Heart right ventricle (tissue), 16 donors: ENCODE measurements at regions of chr15 and their contacts with region 1.

Region 1: GRCh38 chr15:101501703-101502373 is 12.3 kb upstream of the PCSK6 start:
- DNase-seq: no peak
- ATAC-seq: peak; percentile 35 to 70 (median 58)
- H3K4me3 ChIP-seq: no peak overlapping the region
- H3K27ac ChIP-seq: no peak overlapping the region
- H3K4me1 ChIP-seq: peaks cover 2 to 32% (median 27%) of the 10 kb centered on the region in 9 donors
- H3K27me3 ChIP-seq: peaks cover 0 to 17% (median 0%) of the 10 kb centered on the region in 7 donors
- CTCF ChIP-seq: peak in 8 of 9 donors; percentile 5 to 71 (median 59)

Region 2: GRCh38 chr15:101179341-101180153 is 322.3 kb before region 1 on chr15:
- intact Hi-C with region 1: no loop called
- DNase-seq: no peak
- ATAC-seq: no peak
- H3K4me3 ChIP-seq: no peak overlapping the region
- H3K27ac ChIP-seq: peak overlapping the region in 5 of 10 donors; percentile 6 to 37 (median 27)
- H3K4me1 ChIP-seq: peaks cover 7 to 82% (median 45%) of the 10 kb centered on the region in 9 donors
- H3K27me3 ChIP-seq: no peaks in the 10 kb centered on the region
- CTCF ChIP-seq: no peak

Region 3: GRCh38 chr15:101294731-101295606 is 206.9 kb before region 1 on chr15 and contains the start of gene SNRPA1:
- intact Hi-C with region 1: loop called in 7 of 10 experiments (anchors 2 to 10 kb)
- DNase-seq: peak; percentile 97 to 99
- ATAC-seq: peak; percentile 93 to 96 (median 94)
- H3K4me3 ChIP-seq: peak within 1 kb of the TSS; percentile 58 to 99 (median 91)
- H3K27ac ChIP-seq: peak within 1 kb of the TSS; percentile 90 to 99 (median 96)
- H3K4me1 ChIP-seq: peaks cover 0 to 43% (median 34%) of the 10 kb centered on the region in 9 donors
- H3K27me3 ChIP-seq: no peaks in the 10 kb centered on the region
- CTCF ChIP-seq: no peak
- total RNA-seq, gene SNRPA1: 23.8 to 36.3 (median 29.9) TPM

Region 4: GRCh38 chr15:101307048-101307896 is 194.6 kb before region 1 on chr15:
- intact Hi-C with region 1: loop called in 5 of 10 experiments (anchors 5 to 10 kb)
- DNase-seq: no peak
- ATAC-seq: peak in 2 of 8 donors; percentile 23 to 24
- H3K4me3 ChIP-seq: no peak overlapping the region
- H3K27ac ChIP-seq: no peak overlapping the region
- H3K4me1 ChIP-seq: no peaks in the 10 kb centered on the region
- H3K27me3 ChIP-seq: no peaks in the 10 kb centered on the region
- CTCF ChIP-seq: no peak

Region 5: GRCh38 chr15:101353240-101353639 is 148.6 kb before region 1 on chr15:
- intact Hi-C with region 1: loop called in 3 of 10 experiments (anchors 5 kb)
- DNase-seq: no peak
- ATAC-seq: no peak
- H3K4me3 ChIP-seq: no peak overlapping the region
- H3K27ac ChIP-seq: no peak overlapping the region
- H3K4me1 ChIP-seq: peaks cover 0 to 29% (median 17%) of the 10 kb centered on the region in 9 donors
- H3K27me3 ChIP-seq: no peaks in the 10 kb centered on the region
- CTCF ChIP-seq: no peak

Region 6: DNA sequence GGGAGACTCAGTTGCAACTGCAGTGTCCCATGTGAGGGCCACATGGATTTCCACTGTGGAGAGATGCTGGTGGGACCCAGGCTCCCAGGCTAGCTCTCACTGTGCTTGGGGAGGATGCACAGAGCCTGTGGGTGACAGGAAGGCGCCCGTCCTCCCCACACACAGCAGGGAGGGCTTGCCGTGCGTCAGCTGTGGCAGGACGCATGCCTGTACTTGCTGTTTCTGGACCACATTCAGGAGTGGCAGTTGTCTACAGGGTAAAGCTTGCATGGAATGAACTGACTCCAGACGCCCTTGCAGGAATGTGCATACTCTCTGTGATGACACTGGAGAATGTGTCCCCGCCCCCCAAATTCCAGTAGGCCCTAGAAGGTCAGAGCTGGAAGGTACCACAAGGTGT is 142.9 kb before region 1 on chr15:
- intact Hi-C with region 1: loop called in 5 of 10 experiments (anchors 5 to 10 kb)
- DNase-seq: peak; percentile 22 to 53
- ATAC-seq: peak; percentile 43 to 91 (median 82)
- H3K4me3 ChIP-seq: no peak overlapping the region
- H3K27ac ChIP-seq: peak overlapping the region in 5 of 10 donors; percentile 42 to 71 (median 58)
- H3K4me1 ChIP-seq: peaks cover 0 to 23% (median 15%) of the 10 kb centered on the region in 9 donors
- H3K27me3 ChIP-seq: no peaks in the 10 kb centered on the region
- CTCF ChIP-seq: no peak

Region 7: GRCh38 chr15:101372149-101372577 is 129.7 kb before region 1 on chr15:
- intact Hi-C with region 1: loop called in 4 of 10 experiments (anchors 1 to 10 kb)
- DNase-seq: no peak
- ATAC-seq: peak in 1 of 8 donors; percentile 51
- H3K4me3 ChIP-seq: no peak overlapping the region
- H3K27ac ChIP-seq: no peak overlapping the region
- H3K4me1 ChIP-seq: peaks cover 0 to 24% (median 5%) of the 10 kb centered on the region in 9 donors
- H3K27me3 ChIP-seq: no peaks in the 10 kb centered on the region
- CTCF ChIP-seq: no peak

Region 8: DNA sequence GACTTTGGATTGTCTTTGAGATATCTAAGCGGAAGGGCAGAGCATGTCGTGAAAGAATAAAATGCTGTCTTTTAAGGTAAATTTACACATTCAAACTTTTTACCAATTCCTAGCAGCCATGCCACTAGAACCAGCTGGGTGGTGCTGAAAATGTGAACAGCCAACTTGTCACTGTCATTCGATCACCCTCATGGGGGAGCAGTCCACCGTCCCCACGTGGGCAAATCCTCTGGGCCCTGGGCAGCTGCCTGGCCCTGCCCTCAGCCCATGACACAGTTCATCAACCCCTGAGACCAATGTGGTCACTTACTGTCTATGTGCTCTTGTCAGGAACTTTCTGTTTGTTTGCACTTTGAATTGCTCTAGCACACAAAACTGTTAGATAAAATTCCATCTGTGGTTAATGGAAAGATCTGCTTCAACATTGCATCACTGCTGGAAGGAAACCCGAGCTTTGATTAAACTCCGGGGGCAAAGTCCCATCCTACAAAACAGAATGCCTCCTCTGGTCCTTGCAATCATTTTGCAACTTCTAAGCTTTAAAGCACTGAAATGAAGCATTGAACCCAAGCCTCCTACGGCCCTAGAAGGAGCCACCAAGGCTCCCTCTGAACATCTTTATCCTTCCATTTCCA is 62.4 kb before region 1 on chr15:
- intact Hi-C with region 1: no loop called
- DNase-seq: no peak
- ATAC-seq: peak; percentile 24 to 72 (median 36)
- H3K4me3 ChIP-seq: peak overlapping the region in 4 of 10 donors; percentile 6 to 39 (median 20)
- H3K27ac ChIP-seq: peak overlapping the region in 9 of 10 donors; percentile 2 to 70 (median 58)
- H3K4me1 ChIP-seq: peaks cover 0 to 51% (median 10%) of the 10 kb centered on the region in 9 donors
- H3K27me3 ChIP-seq: no peaks in the 10 kb centered on the region
- CTCF ChIP-seq: no peak